ENCODE measurements at regions of chr2 and their contacts with region 1.

Region 1: DNA sequence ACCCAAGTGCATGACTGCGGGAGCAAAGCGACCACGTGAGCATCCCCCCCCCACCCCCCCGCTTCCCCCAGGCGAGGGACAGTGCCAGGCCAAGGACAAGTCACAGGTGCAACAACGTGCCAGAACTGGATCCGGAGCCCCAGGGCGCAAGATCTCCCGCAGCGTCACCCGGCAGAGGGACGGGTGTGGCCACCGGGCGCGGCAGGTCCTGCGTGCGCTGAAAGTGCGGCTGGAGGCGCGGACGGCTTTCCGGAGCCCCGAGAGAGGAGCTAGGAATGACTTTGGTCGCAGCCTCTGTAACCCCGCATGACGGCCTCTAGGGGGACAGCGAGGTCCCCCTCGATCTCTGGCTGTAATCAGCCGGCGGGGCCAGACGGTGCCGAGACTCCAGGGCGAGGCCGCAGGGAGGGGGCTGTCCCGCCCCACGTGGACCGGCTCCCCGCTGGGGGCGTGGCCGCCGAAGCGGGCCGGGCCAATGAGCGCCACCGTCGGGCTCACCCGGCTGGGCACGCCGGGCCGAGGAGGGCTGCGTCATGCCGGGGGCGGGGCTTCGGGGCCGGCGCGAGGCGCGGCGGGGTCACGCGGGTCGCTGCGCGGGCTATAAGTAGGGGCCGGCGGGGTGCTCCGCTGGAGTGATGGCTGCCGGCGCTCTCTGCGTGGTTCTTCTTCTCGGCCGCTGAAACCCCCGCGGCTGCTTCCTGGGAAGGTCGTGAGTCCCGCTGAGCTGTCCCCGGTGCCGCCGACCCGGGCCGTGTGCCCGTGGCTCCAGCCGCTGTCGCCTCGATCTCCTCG is at the start of gene SLC20A1:
- DNase-seq: peak; percentile 93 to 94
- ATAC-seq: peak; percentile 87 to 88
- H3K4me3 ChIP-seq: peak within 1 kb of the TSS; percentile 76 to 91 (median 81)
- H3K27ac ChIP-seq: peak within 1 kb of the TSS; percentile 95 to 99 (median 96)
- H3K4me1 ChIP-seq: peaks cover 22 to 26% of the 10 kb centered on the region in 2 donors
- H3K27me3 ChIP-seq: no peaks in the 10 kb centered on the region
- CTCF ChIP-seq: peak in 4 of 5 experiments; percentile 16 to 56 (median 46)
- POLR2A ChIP-seq: peak; percentile 99 to 100
- total RNA-seq, gene SLC20A1: 6.9 to 85.7 (median 9.2) TPM

Region 2: DNA sequence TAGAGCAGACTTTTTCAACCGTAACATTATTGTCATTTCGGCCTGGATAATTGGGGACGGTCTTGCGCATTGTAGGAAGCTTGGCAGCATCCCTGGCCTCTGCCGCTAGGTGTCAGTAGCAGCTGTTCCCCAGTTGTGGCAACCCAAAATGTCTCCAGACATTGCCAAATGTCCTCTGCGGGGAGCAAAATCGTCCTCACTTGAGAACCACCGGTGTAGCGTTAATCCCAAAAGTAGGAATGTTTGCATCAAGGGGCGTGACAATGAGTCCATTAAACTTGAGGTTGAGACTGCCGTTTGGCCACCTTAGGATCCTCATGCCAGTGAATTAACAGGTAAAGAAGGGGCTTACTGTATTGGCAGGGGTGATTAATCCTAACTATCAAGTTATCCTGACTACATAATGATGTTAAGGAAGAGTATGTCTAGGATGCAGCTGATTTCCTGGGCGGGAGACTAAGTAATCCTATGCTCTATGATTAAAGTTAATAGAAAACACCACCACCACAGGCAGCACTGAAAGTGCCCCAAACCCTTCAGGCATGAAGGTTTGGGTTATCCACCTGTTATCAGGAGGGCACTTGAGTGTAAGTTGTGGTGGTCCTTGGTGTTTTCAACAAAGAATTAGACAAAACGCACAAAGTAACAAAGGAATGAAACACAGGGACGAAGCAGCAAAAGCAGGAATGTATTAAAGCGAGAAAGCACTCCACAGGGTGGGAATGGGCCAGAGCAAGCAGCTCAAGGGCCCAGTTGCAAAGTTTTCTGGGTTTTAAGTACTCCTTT is 385.8 kb before region 1 on chr2:
- in situ Hi-C with region 1: no loop called
- intact Hi-C with region 1: loop called (anchors 2 kb)
- DNase-seq: peak; percentile 58 to 79
- ATAC-seq: peak; percentile 71 to 74
- H3K4me3 ChIP-seq: peak overlapping the region in 1 of 4 donors; percentile 27
- H3K27ac ChIP-seq: no peak overlapping the region
- H3K4me1 ChIP-seq: peaks cover 5 to 6% of the 10 kb centered on the region in 2 donors
- H3K27me3 ChIP-seq: no peaks in the 10 kb centered on the region
- CTCF ChIP-seq: peak; percentile 86 to 96 (median 92)
- POLR2A ChIP-seq: no peak

Region 3: GRCh38 chr2:112542123-112542983 is 103.2 kb before region 1 on chr2 and contains the start of gene POLR1B:
- in situ Hi-C with region 1: no loop called
- intact Hi-C with region 1: loop called (anchors 5 kb)
- DNase-seq: peak; percentile 79 to 85
- ATAC-seq: peak; percentile 95 to 97
- H3K4me3 ChIP-seq: peak within 1 kb of the TSS; percentile 74 to 99 (median 90)
- H3K27ac ChIP-seq: peak within 1 kb of the TSS; percentile 75 to 90 (median 88)
- H3K4me1 ChIP-seq: peaks cover 20 to 25% of the 10 kb centered on the region in 2 donors
- H3K27me3 ChIP-seq: no peaks in the 10 kb centered on the region
- CTCF ChIP-seq: no peak
- POLR2A ChIP-seq: no peak
- total RNA-seq, gene POLR1B: 13.0 to 18.1 (median 13.3) TPM

Region 4: GRCh38 chr2:112685271-112685884 is 39.9 kb after region 1 on chr2:
- in situ Hi-C with region 1: no loop called
- intact Hi-C with region 1: loop called (anchors 5 kb)
- DNase-seq: no peak
- ATAC-seq: no peak
- H3K4me3 ChIP-seq: no peak overlapping the region
- H3K27ac ChIP-seq: no peak overlapping the region
- H3K4me1 ChIP-seq: peaks cover 6 to 16% of the 10 kb centered on the region in 2 donors
- H3K27me3 ChIP-seq: no peaks in the 10 kb centered on the region
- CTCF ChIP-seq: peak in 1 of 5 experiments; percentile 16
- POLR2A ChIP-seq: no peak